GM18951 (cell line): ENCODE measurements at regions of chr15 and their contacts with region 1.

Region 1: DNA sequence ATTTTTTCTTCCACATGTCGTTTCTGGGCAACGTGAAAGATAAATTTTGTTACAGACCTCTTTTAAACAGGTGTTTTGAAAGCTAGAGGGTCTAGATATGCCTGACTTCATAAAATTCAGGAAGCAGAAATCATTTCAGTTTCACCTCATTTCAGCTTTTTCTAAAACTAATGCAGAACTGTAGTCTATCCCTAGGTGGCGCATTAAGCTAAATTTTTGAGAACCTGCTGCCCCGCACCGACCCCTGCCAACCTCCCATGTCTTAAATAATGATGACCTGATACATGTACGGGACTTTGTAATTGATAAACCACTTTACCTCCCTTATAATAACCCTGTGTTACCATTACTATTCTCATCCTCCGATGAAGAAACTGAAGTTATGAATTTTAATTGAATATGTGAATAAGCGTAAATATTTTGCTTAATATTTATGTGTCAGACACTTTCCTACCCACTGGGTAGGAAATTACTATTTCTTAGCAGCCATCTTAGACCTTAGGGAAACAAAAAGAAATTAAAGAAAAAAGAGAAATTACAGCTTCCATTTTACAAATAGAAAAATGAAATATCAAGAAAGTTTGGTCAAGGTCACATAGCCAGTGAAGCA is 78.7 kb upstream of the GCNT3 start:
- POLR2A ChIP-seq: no peak

Region 2: GRCh38 chr15:59437817-59438562 is 94.9 kb before region 1 on chr15 and contains the start of gene FAM81A:
- in situ Hi-C with region 1: no loop called
- POLR2A ChIP-seq: peak; percentile 57

Region 3: GRCh38 chr15:59622289-59622688 is 89.4 kb after region 1 on chr15:
- in situ Hi-C with region 1: loop called (anchors 10 kb)
- POLR2A ChIP-seq: no peak